CD4-positive, alpha-beta T cell (primary cell): ENCODE measurements at regions of chr6 and their contacts with region 1.

Region 1: GRCh38 chr6:136643850-136644596 is 93.8 kb upstream of the MAP7 start:
- DNase-seq: peak; percentile 67 to 91 (median 80)
- ATAC-seq: peak; percentile 61
- H3K4me3 ChIP-seq: no peak overlapping the region
- H3K4me3 Mint-ChIP-seq: no peak overlapping the region
- H3K27ac ChIP-seq: no peak overlapping the region
- H3K27ac Mint-ChIP-seq: no peak overlapping the region
- H3K4me1 ChIP-seq: peaks cover 16% of the 10 kb centered on the region
- H3K4me1 Mint-ChIP-seq: no peaks in the 10 kb centered on the region
- H3K27me3 ChIP-seq: no peaks in the 10 kb centered on the region
- H3K27me3 Mint-ChIP-seq: no peaks in the 10 kb centered on the region
- CTCF ChIP-seq: peak; percentile 90

Region 2: GRCh38 chr6:136696238-136696637 is 52.2 kb after region 1 on chr6:
- CTCF ChIA-PET with region 1: no interaction called
- POLR2A ChIA-PET with region 1: no interaction called
- intact Hi-C with region 1: loop called in 1 of 2 experiments (anchors 5 kb)
- DNase-seq: no peak
- ATAC-seq: no peak
- H3K4me3 ChIP-seq: no peak overlapping the region
- H3K4me3 Mint-ChIP-seq: no peak overlapping the region
- H3K27ac ChIP-seq: no peak overlapping the region
- H3K27ac Mint-ChIP-seq: no peak overlapping the region
- H3K4me1 ChIP-seq: peaks cover 4% of the 10 kb centered on the region
- H3K4me1 Mint-ChIP-seq: peaks cover 12% of the 10 kb centered on the region
- H3K27me3 ChIP-seq: no peaks in the 10 kb centered on the region
- H3K27me3 Mint-ChIP-seq: no peaks in the 10 kb centered on the region
- CTCF ChIP-seq: no peak